Activated B cell treated with CpG ODN at 0.5 μM for 24 hours (primary cell): ENCODE measurements at regions of chr1 and their contacts with region 1.

Region 1: DNA sequence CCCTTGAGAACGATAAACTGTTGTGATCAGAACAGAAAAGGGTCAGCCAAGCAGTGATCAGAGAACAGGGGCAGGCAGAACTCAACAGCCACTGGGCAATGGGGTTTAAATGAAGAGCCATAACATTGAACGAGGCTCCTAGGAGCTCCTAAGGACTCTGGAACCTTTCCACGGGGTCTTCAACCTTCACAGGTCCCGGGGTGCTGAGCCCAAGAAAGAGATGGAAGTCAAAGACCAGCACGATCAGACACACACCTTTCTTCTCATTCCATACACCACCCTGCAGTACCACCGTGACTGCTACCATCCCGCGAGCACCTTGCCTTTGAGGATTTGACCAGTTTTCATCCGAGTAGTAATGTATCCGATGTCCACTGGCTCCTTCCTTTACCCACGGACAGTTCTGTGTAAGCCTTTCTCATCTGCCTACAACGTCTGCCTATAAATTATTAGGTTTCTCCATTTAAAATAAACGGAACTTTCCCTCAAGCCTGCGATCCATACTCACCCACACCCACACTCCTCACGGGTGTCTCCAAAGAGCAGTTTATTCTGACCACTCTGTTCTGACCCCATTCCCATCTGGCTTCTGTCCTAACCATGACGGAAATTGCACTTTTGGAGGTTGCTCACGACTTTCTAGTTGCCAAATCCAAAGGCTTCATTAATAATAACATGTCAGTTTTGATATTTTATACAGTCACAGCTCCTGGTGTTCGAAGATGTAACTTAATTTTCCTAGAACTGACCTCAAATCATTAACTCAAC is 16.8 kb upstream of the HHAT start:
- DNase-seq: no peak
- ATAC-seq: no peak
- H3K4me3 Mint-ChIP-seq: peak overlapping the region; percentile 83
- H3K27ac Mint-ChIP-seq: no peak overlapping the region
- H3K4me1 Mint-ChIP-seq: peaks cover 4% of the 10 kb centered on the region
- H3K27me3 Mint-ChIP-seq: peaks cover 18% of the 10 kb centered on the region
- CTCF ChIP-seq: no peak

Region 2: DNA sequence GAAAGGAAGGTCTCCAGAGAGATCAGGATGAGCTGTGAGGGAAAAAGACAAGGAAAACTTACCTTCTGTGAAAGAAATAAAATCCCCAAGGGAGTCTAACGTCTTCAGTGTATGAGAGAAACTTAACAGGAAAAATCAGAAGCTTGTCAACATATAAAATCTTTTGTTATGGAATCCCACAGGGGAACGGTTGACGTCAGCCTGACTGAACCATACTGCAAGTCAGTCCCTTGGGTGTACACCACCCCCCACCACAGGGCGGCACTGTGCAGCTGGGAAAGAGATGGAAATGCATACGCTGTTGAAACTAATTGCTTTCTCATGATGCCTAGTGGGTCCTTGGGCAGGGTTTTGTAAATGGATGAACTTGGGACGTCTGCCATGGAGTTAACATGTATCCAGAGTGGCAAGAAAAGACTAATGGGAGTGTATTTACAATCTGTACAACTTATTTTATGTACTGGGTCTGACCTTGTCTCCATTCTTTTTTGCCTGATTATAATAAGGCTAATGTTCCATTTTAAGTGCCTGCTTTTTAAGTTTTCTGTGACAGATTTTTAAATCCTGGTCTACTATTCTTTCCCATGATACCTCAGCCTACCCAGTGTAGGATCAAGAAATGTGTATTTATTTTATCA is 461.4 kb before region 1 on chr1:
- CTCF ChIA-PET with region 1: interaction called, 3 read pairs
- POLR2A ChIA-PET with region 1: no interaction called
- intact Hi-C with region 1: loop called (anchors 2 kb)
- DNase-seq: no peak
- ATAC-seq: peak; percentile 70
- H3K4me3 Mint-ChIP-seq: no peak overlapping the region
- H3K27ac Mint-ChIP-seq: peak overlapping the region; percentile 30
- H3K4me1 Mint-ChIP-seq: peaks cover 8% of the 10 kb centered on the region
- H3K27me3 Mint-ChIP-seq: no peaks in the 10 kb centered on the region
- CTCF ChIP-seq: no peak

Region 3: DNA sequence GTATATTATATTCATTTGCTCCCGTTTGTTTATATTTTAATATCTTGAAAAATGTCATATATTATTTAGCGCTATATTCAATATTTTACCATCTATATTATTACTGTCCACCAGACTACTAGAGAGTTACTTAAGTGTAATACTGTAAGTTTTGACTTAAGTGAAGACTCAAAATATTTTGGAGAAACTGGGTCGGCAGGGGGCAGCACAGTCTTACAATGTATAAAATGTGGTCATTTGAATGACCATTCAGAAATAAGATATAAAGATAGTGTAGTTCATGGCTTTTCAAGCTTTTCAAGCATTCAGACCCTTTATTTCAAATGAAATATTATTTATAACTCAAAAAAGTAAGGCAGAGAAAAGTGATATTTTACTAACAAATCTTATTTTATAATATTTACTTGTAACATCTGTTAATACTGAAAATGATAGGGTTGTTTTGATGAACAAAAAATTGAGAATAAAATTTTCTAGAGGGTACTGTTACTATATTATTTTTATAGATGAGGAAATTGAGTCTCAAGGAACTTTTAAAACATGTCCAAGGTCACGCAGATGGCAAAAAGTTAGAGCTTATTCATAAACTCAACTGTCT is 168.3 kb before region 1 on chr1:
- CTCF ChIA-PET with region 1: interaction called, 13 read pairs
- POLR2A ChIA-PET with region 1: no interaction called
- intact Hi-C with region 1: loop called (anchors 1 kb)
- DNase-seq: peak; percentile 16
- ATAC-seq: no peak
- H3K4me3 Mint-ChIP-seq: no peak overlapping the region
- H3K27ac Mint-ChIP-seq: no peak overlapping the region
- H3K4me1 Mint-ChIP-seq: no peaks in the 10 kb centered on the region
- H3K27me3 Mint-ChIP-seq: peaks cover 18% of the 10 kb centered on the region
- CTCF ChIP-seq: no peak

Region 4: GRCh38 chr1:210342986-210343780 is 31.3 kb after region 1 on chr1:
- CTCF ChIA-PET with region 1: no interaction called
- POLR2A ChIA-PET with region 1: no interaction called
- intact Hi-C with region 1: loop called (anchors 1 kb)
- DNase-seq: peak; percentile 62
- ATAC-seq: peak; percentile 90
- H3K4me3 Mint-ChIP-seq: no peak overlapping the region
- H3K27ac Mint-ChIP-seq: no peak overlapping the region
- H3K4me1 Mint-ChIP-seq: peaks cover 34% of the 10 kb centered on the region
- H3K27me3 Mint-ChIP-seq: no peaks in the 10 kb centered on the region
- CTCF ChIP-seq: no peak

Region 5: GRCh38 chr1:210400043-210400840 is 88.3 kb after region 1 on chr1:
- CTCF ChIA-PET with region 1: interaction called, 6 read pairs
- POLR2A ChIA-PET with region 1: no interaction called
- intact Hi-C with region 1: loop called (anchors 1 kb)
- DNase-seq: peak; percentile 31
- ATAC-seq: peak; percentile 91
- H3K4me3 Mint-ChIP-seq: peak overlapping the region; percentile 5
- H3K27ac Mint-ChIP-seq: peak overlapping the region; percentile 9
- H3K4me1 Mint-ChIP-seq: peaks cover 9% of the 10 kb centered on the region
- H3K27me3 Mint-ChIP-seq: no peaks in the 10 kb centered on the region
- CTCF ChIP-seq: no peak

Region 6: GRCh38 chr1:210553741-210554140 is 241.8 kb after region 1 on chr1:
- CTCF ChIA-PET with region 1: no interaction called
- POLR2A ChIA-PET with region 1: no interaction called
- intact Hi-C with region 1: no loop called
- DNase-seq: no peak
- ATAC-seq: no peak
- H3K4me3 Mint-ChIP-seq: no peak overlapping the region
- H3K27ac Mint-ChIP-seq: no peak overlapping the region
- H3K4me1 Mint-ChIP-seq: no peaks in the 10 kb centered on the region
- H3K27me3 Mint-ChIP-seq: no peaks in the 10 kb centered on the region
- CTCF ChIP-seq: no peak